ENCODE measurements at regions of chr1 and their contacts with region 1.

Region 1: DNA sequence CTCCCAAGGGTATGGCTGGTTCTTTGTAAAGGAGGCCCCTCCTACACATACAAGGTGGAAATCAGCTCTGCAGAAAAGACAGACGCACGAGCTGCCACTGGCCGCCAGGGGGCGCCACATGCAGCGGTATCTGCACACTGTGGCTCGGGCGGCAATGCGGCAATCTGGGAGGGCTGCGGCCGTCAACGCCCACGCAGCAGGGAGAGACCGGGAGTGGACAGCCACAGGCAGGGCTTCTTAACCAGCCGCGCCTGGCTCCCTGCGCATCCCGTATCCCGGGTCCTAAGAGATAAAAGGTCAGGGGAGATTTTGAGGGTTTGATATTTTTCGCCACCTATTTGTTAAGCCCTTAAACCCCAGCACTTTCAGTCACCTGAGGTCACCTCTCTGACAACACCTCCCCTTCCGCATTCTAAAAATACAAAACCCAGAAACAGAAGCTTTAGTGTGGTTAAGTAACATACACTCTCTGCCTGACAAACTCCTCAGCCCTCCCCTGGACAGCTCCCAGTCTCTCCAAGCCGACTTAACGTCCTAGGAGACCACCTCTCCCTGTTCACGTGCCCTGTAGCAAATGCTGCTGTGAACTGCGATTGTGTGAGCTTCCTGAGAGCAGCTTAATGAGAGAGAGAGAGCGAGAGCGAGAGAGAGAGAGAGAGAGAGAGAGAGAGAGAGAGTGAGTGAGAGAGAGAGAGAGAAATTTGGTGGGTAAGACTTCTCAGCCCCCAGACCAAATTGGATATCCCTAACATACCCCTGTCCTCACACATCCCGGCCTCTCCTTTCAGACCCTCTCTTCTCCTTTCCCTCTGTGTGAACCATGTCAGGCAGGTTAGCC is 13.5 kb upstream of the KCNA2 start:
- DNase-seq: peak; percentile 77 to 93 (median 89)

Region 2: GRCh38 chr1:110524311-110525251 is 95.0 kb before region 1 on chr1:
- intact Hi-C with region 1: loop called (anchors 5 kb)
- DNase-seq: peak; percentile 35 to 89 (median 74)

Region 3: GRCh38 chr1:110542725-110543124 is 76.9 kb before region 1 on chr1:
- intact Hi-C with region 1: no loop called
- DNase-seq: no peak

Region 4: DNA sequence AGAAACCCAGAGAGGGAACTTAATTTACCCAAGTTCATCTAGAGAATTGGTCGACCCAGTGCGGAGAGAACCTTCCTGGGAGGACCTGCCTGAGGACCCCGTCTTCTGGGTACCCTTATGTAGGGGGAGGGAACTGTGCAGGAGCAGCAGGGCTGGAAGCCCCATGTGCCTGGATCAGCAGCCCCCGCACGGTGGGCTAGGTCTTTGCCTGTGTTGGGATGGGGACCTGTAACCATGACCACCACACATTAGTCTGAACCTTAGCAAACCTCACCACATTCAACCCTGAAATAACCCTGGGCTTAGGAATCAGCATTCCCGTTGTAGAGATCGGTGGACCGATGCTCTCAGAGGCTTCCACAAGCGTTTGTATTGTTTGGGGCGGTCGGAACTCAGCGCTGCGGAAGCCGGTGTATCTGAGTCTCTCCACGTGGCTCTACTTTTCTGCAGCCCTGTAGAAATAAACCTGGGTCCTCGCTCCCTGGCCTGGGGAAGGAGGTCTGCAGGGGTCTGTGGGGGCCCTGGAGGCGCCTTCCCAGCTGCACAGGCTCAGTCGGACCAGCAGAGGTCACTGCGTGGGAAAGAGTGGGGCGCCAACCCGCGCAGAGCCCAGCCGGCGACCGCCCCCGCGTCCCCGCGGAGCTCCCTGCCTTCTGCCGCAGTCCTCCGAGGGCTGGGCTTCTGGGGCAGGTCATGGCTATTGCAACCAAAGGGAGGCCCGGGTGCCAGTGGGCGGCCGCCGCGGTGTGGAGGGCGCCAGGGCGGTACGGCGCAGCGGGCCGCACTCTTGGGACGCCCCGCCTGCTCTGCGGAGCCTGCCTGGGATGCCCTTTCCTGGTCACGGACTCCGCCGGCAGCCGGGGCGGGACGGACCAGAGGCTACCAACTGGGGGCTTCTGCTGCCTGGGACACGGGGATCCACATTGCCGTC is 64.5 kb before region 1 on chr1:
- intact Hi-C with region 1: loop called (anchors 2 kb)
- DNase-seq: peak; percentile 46 to 92 (median 80)

Region 5: GRCh38 chr1:110780600-110781484 is 161.2 kb after region 1 on chr1:
- intact Hi-C with region 1: loop called (anchors 5 kb)
- DNase-seq: peak; percentile 34 to 88 (median 71)

Measured in head of caudate nucleus (tissue), 42 donors.